OCI-LY7 (cell line): ENCODE measurements at regions of chr3 and their contacts with region 1.

Region 1: GRCh38 chr3:161069511-161070263 is 35.5 kb downstream of the B3GALNT1 start:
- DNase-seq: peak; percentile 87
- H3K4me3 ChIP-seq: peak overlapping the region; percentile 49
- H3K27ac ChIP-seq: peak overlapping the region; percentile 93
- H3K4me1 ChIP-seq: peaks cover 66% of the 10 kb centered on the region
- CTCF ChIP-seq: no peak

Region 2: DNA sequence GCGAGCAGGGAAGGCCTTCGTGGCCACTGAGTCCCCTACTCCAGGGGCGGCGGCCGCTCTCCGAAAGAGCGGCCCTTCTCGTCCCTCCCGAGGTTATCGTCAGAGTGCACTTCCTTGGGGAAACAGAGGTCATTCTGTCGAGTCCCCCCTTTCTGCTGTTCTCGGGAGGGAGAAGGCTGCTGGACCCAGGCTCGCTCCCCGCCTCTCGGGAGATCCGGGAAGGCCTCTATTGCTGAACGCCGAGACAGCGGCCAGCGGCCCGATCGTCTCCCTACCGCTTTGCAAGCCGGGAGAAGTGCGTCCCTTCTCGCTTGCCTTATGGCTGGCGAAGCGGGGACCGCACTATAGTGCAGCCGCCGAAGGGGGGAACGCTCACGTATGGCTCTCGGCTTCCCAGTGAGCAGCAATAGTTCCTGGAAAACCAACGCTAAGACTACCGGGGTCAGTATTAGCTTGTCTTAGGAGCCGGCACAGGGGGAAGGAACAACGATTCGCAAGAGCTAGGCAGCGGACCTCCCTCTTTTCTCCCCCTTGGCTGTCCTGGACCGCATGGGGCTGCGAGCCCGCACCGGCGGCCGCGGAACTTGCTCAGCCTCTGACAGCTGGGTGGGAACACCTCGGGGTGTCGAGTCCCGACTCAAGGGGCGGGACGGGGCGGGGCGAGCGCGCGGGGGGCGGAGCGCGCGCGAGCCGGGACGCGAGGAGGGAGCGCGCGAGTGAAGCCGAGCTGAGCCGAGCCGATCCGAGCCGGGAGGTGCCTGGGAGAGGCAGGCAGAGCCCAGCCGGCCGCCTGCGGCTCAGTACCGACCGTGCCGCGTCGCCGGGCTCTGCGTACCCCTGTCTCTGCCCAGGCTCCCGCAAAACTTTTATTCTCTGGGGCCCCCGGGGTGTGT is 314.6 kb before region 1 on chr3:
- CTCF ChIA-PET with region 1: no interaction called
- POLR2A ChIA-PET with region 1: no interaction called
- intact Hi-C with region 1: loop called (anchors 5 kb)
- DNase-seq: peak; percentile 95
- H3K4me3 ChIP-seq: peak overlapping the region; percentile 84
- H3K27ac ChIP-seq: peak overlapping the region; percentile 69
- H3K4me1 ChIP-seq: peaks cover 26% of the 10 kb centered on the region
- CTCF ChIP-seq: no peak

Region 3: GRCh38 chr3:160860346-160860745 is 209.3 kb before region 1 on chr3:
- CTCF ChIA-PET with region 1: no interaction called
- POLR2A ChIA-PET with region 1: no interaction called
- intact Hi-C with region 1: no loop called
- DNase-seq: no peak
- H3K4me3 ChIP-seq: no peak overlapping the region
- H3K27ac ChIP-seq: no peak overlapping the region
- H3K4me1 ChIP-seq: no peaks in the 10 kb centered on the region
- CTCF ChIP-seq: no peak

Region 4: GRCh38 chr3:161014843-161015749 is 54.6 kb before region 1 on chr3:
- CTCF ChIA-PET with region 1: interaction called, 3 read pairs
- POLR2A ChIA-PET with region 1: interaction called, 7 read pairs
- intact Hi-C with region 1: loop called (anchors 5 kb)
- DNase-seq: peak; percentile 72
- H3K4me3 ChIP-seq: peak overlapping the region; percentile 52
- H3K27ac ChIP-seq: peak overlapping the region; percentile 96
- H3K4me1 ChIP-seq: peaks cover 48% of the 10 kb centered on the region
- CTCF ChIP-seq: no peak

Region 5: GRCh38 chr3:161081633-161082032 is 11.9 kb after region 1 on chr3:
- CTCF ChIA-PET with region 1: interaction called, 3 read pairs
- POLR2A ChIA-PET with region 1: interaction called, 10 read pairs
- intact Hi-C with region 1: no loop called
- DNase-seq: no peak
- H3K4me3 ChIP-seq: no peak overlapping the region
- H3K27ac ChIP-seq: no peak overlapping the region
- H3K4me1 ChIP-seq: peaks cover 24% of the 10 kb centered on the region
- CTCF ChIP-seq: no peak